ENCODE measurements at regions of chr1 and their contacts with region 1.

Region 1: GRCh38 chr1:186323865-186324264 is 51.2 kb downstream of the TPR start:
- DNase-seq: no peak
- ATAC-seq: no peak
- H3K4me3 ChIP-seq: no peak overlapping the region
- H3K4me3 Mint-ChIP-seq: no peak overlapping the region
- H3K27ac ChIP-seq: no peak overlapping the region
- H3K27ac Mint-ChIP-seq: no peak overlapping the region
- H3K4me1 ChIP-seq: no peaks in the 10 kb centered on the region
- H3K4me1 Mint-ChIP-seq: peaks cover 7% of the 10 kb centered on the region in 2 donors
- H3K27me3 ChIP-seq: no peaks in the 10 kb centered on the region
- H3K27me3 Mint-ChIP-seq: no peaks in the 10 kb centered on the region
- CTCF ChIP-seq: no peak

Region 2: DNA sequence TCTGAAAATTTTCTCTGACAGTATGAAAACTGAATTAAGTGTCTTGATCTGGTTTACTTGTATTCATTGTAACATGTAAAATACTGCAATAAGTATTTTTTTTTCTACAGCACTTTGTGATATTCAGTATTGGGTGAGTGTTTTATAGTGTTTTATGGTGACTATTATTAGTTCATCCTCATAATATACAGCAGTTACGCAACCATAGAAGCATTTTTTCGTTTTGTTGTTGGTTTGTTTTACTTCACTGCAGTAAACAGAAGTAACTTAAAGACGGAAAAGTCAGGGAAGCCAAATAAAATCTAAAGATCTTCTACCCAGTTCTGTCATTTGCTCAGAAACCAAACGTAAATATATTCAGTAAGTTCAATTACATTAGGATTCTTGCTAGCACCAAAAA is 198.8 kb before region 1 on chr1:
- intact Hi-C with region 1: no loop called
- DNase-seq: no peak
- ATAC-seq: no peak
- H3K4me3 ChIP-seq: no peak overlapping the region
- H3K4me3 Mint-ChIP-seq: no peak overlapping the region
- H3K27ac ChIP-seq: no peak overlapping the region
- H3K27ac Mint-ChIP-seq: no peak overlapping the region
- H3K4me1 ChIP-seq: no peaks in the 10 kb centered on the region
- H3K4me1 Mint-ChIP-seq: no peaks in the 10 kb centered on the region
- H3K27me3 ChIP-seq: no peaks in the 10 kb centered on the region
- H3K27me3 Mint-ChIP-seq: peaks cover 0 to 3% of the 10 kb centered on the region in 2 donors
- CTCF ChIP-seq: no peak

Region 3: DNA sequence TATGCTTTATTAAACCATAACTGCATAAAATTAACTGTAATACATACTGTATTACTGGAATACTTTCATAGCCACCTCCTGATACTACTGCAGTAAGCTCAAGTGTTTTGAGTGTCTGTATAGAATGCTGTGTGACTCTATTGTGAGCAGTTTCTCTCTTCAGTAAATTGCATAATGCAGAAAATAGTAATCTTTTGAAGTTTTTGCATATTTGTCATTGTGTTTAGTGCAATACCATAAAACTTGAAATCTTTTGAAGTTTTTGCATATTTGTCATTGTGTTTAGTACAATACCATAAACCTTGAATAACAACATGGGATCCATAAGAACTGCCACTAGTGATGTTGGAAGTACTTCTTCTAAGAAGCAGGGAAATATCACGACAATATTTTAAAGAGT is 40.0 kb after region 1 on chr1:
- intact Hi-C with region 1: loop called (anchors 5 kb)
- DNase-seq: no peak
- ATAC-seq: no peak
- H3K4me3 ChIP-seq: no peak overlapping the region
- H3K4me3 Mint-ChIP-seq: no peak overlapping the region
- H3K27ac ChIP-seq: no peak overlapping the region
- H3K27ac Mint-ChIP-seq: no peak overlapping the region
- H3K4me1 ChIP-seq: no peaks in the 10 kb centered on the region
- H3K4me1 Mint-ChIP-seq: peaks cover 5 to 11% of the 10 kb centered on the region in 2 donors
- H3K27me3 ChIP-seq: no peaks in the 10 kb centered on the region
- H3K27me3 Mint-ChIP-seq: no peaks in the 10 kb centered on the region
- CTCF ChIP-seq: no peak